Mucosa of descending colon (tissue), 3 donors: ENCODE measurements at regions of chr6 and their contacts with region 1.

Region 1: DNA sequence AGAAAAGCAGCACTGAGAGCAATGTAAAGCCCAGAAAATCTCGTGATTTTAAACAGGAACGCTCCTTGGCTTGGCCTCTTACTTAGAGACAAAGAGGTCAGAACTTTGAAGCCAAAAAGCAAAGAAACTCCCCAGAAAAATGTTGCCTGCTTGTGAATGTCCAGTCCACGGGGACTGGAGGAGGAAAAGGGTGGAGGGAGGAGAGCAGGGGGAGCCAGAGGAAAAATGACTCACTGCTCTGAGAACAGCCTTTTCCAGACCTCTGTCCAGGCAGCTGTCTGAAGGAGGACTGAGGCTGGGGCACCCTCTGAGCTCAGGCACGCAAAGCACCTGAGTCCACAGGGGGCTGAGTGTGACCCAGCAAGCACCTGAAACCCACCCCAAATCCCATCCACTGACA is 64.7 kb downstream of the TRAM2 start:
- DNase-seq: no peak
- ATAC-seq: peak; percentile 64
- H3K4me3 ChIP-seq: no peak overlapping the region
- H3K4me1 ChIP-seq: no peaks in the 10 kb centered on the region
- CTCF ChIP-seq: no peak

Region 2: GRCh38 chr6:52352239-52353008 is 159.8 kb before region 1 on chr6:
- intact Hi-C with region 1: no loop called
- DNase-seq: peak in 1 of 3 donors; percentile 47
- ATAC-seq: peak; percentile 89
- H3K4me3 ChIP-seq: no peak overlapping the region
- H3K4me1 ChIP-seq: peaks cover 16% of the 10 kb centered on the region
- CTCF ChIP-seq: no peak

Region 3: GRCh38 chr6:52577022-52577777 is 65.0 kb after region 1 on chr6 and contains the start of gene TRAM2:
- intact Hi-C with region 1: loop called in 1 of 2 experiments (anchors 5 kb)
- DNase-seq: peak; percentile 89 to 92 (median 92)
- ATAC-seq: peak; percentile 92
- H3K4me3 ChIP-seq: peak within 1 kb of the TSS; percentile 63
- H3K4me1 ChIP-seq: peaks cover 22% of the 10 kb centered on the region
- CTCF ChIP-seq: no peak
- total RNA-seq, gene TRAM2: 20.3 to 25.0 (median 24.1) TPM

Region 4: GRCh38 chr6:53119772-53120409 is 607.7 kb after region 1 on chr6:
- intact Hi-C with region 1: no loop called
- DNase-seq: peak; percentile 29 to 52 (median 43)
- ATAC-seq: peak; percentile 72
- H3K4me3 ChIP-seq: no peak overlapping the region
- H3K4me1 ChIP-seq: no peaks in the 10 kb centered on the region
- CTCF ChIP-seq: no peak